ENCODE measurements at regions of chr2 and their contacts with region 1.

Region 1: GRCh38 chr2:133780099-133780839 is 212.0 kb upstream of the NCKAP5 start:
- DNase-seq: peak in 1 of 2 donors; percentile 69
- ATAC-seq: peak in 7 of 8 donors; percentile 49 to 77 (median 67)
- H3K4me3 ChIP-seq: no peak overlapping the region
- H3K27ac ChIP-seq: no peak overlapping the region
- H3K4me1 ChIP-seq: peaks cover 0 to 10% (median under 1%) of the 10 kb centered on the region in 9 donors
- H3K27me3 ChIP-seq: no peaks in the 10 kb centered on the region
- CTCF ChIP-seq: peak; percentile 47 to 83 (median 77)

Region 2: GRCh38 chr2:133255360-133255759 is 524.9 kb before region 1 on chr2:
- intact Hi-C with region 1: loop called in 3 of 10 experiments (anchors 10 kb)
- DNase-seq: no peak
- ATAC-seq: no peak
- H3K4me3 ChIP-seq: no peak overlapping the region
- H3K27ac ChIP-seq: no peak overlapping the region
- H3K4me1 ChIP-seq: no peaks in the 10 kb centered on the region
- H3K27me3 ChIP-seq: no peaks in the 10 kb centered on the region
- CTCF ChIP-seq: no peak

Region 3: DNA sequence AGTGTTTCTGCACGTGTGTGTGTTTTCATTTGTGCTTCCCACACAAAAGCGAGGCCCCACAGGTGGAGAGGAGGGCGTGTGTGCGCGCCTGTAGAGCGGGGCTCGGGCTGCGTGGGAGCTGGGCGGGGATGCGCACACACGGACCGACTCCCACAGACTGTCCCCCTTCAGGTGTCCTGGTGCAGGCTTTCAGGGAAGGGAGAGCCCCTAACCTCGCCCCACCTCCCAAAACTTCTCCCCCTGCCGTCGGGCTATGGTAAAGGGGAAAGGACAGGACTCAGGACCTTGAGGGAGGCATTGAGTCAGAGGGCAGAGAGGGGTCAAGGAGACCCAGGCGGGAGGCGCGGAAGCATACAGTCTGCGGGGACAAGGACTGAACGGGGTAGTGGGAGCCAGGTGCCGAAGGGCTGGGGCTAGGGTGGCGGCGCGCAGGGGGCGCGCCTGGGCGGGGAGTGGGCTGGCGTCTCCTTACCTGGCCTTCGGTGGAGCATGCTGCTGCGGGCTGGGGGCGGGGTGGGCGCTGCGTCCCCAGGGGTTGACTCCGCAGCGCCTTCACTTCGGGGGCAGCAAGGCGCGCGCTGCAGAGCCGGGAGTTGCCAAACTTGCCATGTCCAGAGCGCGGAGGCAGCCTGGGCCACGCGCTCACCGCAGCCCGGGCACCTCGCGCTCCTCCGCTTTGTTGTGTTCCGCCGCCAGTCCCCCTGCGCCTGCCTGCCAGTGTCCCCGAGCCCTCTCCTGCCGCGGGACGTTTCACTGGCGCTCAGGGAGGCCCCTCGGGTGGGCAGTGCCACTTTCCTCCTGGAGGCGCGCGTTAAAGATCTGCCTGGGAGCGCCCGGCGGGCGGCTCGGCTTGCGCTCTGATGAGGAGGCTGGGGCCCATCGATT is 514.0 kb before region 1 on chr2:
- intact Hi-C with region 1: loop called in 2 of 10 experiments (anchors 10 kb)
- DNase-seq: peak in 1 of 2 donors; percentile 26
- ATAC-seq: peak; percentile 33 to 76 (median 52)
- H3K4me3 ChIP-seq: peak overlapping the region in 9 of 10 donors; percentile 37 to 59 (median 52)
- H3K27ac ChIP-seq: peak overlapping the region in 5 of 10 donors; percentile 13 to 52 (median 25)
- H3K4me1 ChIP-seq: peaks cover 0 to 30% (median 0%) of the 10 kb centered on the region in 9 donors
- H3K27me3 ChIP-seq: peaks cover 0 to 20% (median 9%) of the 10 kb centered on the region in 7 donors
- CTCF ChIP-seq: peak in 2 of 9 donors; percentile 9 to 11

Region 4: GRCh38 chr2:133421516-133422312 is 358.6 kb before region 1 on chr2:
- intact Hi-C with region 1: loop called in 1 of 10 experiments (anchors 10 kb)
- DNase-seq: peak; percentile 14 to 35
- ATAC-seq: peak; percentile 72 to 97 (median 90)
- H3K4me3 ChIP-seq: no peak overlapping the region
- H3K27ac ChIP-seq: peak overlapping the region in 3 of 10 donors; percentile 7 to 32 (median 16)
- H3K4me1 ChIP-seq: peaks cover 0 to 26% (median 3%) of the 10 kb centered on the region in 9 donors
- H3K27me3 ChIP-seq: no peaks in the 10 kb centered on the region
- CTCF ChIP-seq: peak in 3 of 9 donors; percentile 27 to 35 (median 28)

Region 5: DNA sequence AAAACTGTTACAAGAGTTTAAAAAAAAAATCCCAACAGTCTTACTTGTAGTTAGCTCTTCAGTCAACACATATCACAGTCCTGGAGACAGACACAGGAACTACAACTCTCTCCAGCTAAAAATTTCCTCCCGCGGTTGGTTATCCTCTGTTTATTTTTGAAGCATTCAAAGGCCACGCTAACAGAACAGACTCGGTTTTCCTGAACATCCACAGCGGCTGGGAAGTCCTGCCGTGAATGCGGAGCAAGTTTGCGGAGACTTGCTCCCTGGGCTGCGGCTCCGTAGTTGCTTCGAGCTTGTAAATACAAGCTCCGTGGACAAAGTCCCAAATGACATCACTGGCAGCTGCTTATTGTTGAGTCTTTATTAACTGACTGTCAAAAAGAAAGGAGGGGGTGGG is 212.1 kb before region 1 on chr2 and contains the start of gene NCKAP5:
- intact Hi-C with region 1: loop called in 7 of 10 experiments (anchors 2 to 10 kb)
- DNase-seq: peak; percentile 14 to 21
- ATAC-seq: peak in 7 of 8 donors; percentile 9 to 72 (median 48)
- H3K4me3 ChIP-seq: peak within 1 kb of the TSS in 9 of 10 donors; percentile 27 to 53 (median 45)
- H3K27ac ChIP-seq: peak within 1 kb of the TSS; percentile 34 to 79 (median 72)
- H3K4me1 ChIP-seq: peaks cover 0 to 31% (median 15%) of the 10 kb centered on the region in 9 donors
- H3K27me3 ChIP-seq: peaks cover 0 to 9% (median 0%) of the 10 kb centered on the region in 7 donors
- CTCF ChIP-seq: peak in 2 of 9 donors; percentile 13 to 19
- total RNA-seq, gene NCKAP5: 4.3 to 11.7 (median 6.6) TPM

Region 6: GRCh38 chr2:133579274-133579673 is 201.0 kb before region 1 on chr2:
- intact Hi-C with region 1: loop called in 2 of 10 experiments (anchors 5 kb)
- DNase-seq: peak; percentile 44 to 61
- ATAC-seq: peak; percentile 66 to 92 (median 89)
- H3K4me3 ChIP-seq: no peak overlapping the region
- H3K27ac ChIP-seq: peak overlapping the region in 4 of 10 donors; percentile 42 to 67 (median 52)
- H3K4me1 ChIP-seq: peaks cover 0 to 29% (median 15%) of the 10 kb centered on the region in 9 donors
- H3K27me3 ChIP-seq: no peaks in the 10 kb centered on the region
- CTCF ChIP-seq: no peak

Region 7: GRCh38 chr2:133674433-133675331 is 105.6 kb before region 1 on chr2:
- intact Hi-C with region 1: loop called in 2 of 10 experiments (anchors 5 to 10 kb)
- DNase-seq: peak; percentile 25 to 43
- ATAC-seq: peak; percentile 42 to 76 (median 66)
- H3K4me3 ChIP-seq: peak overlapping the region in 9 of 10 donors; percentile 4 to 48 (median 31)
- H3K27ac ChIP-seq: peak overlapping the region; percentile 4 to 82 (median 75)
- H3K4me1 ChIP-seq: peaks cover 2 to 38% (median 20%) of the 10 kb centered on the region in 9 donors
- H3K27me3 ChIP-seq: no peaks in the 10 kb centered on the region
- CTCF ChIP-seq: no peak